Vagina (tissue), 2 donors: ENCODE measurements at regions of chr19 and their contacts with region 1.

Region 1: GRCh38 chr19:29001141-29001581 is 211.8 kb downstream of the UQCRFS1 start:
- DNase-seq: no peak
- H3K4me3 ChIP-seq: no peak overlapping the region
- H3K27ac ChIP-seq: peak overlapping the region; percentile 76
- H3K4me1 ChIP-seq: peaks cover 38% of the 10 kb centered on the region
- H3K27me3 ChIP-seq: no peaks in the 10 kb centered on the region
- CTCF ChIP-seq: no peak
- POLR2A ChIP-seq: no peak

Region 2: DNA sequence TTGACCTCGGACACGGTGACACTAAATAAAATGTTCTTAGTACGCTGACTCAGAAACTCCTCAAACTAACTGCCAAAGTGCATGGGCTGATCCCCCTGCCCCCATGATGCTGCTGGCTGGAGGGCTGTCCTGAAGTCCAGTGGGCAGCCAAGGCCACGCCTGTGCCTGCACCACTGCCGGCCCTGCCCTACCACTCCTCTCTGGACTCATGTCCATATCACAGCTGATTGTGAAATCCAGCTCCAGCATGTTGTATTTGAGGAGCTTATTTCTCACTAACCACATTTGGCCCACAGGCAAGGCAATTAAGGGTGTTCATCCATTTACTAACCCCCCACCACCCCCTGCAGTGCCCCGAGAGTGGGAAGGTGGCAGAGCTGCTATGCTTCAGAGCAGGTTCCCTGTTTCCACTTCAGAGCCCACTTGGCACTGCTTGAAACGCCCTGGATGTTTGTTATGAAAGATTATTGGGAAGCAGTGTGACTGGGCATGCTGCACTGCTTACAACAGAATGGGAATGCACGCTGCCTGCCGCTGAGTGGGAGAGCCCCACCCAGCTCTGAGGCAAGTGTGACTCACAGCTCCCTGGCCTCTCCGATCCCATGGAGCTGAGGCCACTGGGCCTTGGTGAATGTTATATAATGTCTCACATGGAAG is 97.8 kb after region 1 on chr19:
- intact Hi-C with region 1: loop called (anchors 10 kb)
- DNase-seq: peak in 1 of 2 donors; percentile 98
- H3K4me3 ChIP-seq: no peak overlapping the region
- H3K27ac ChIP-seq: peak overlapping the region; percentile 70
- H3K4me1 ChIP-seq: peaks cover 43% of the 10 kb centered on the region
- H3K27me3 ChIP-seq: no peaks in the 10 kb centered on the region
- CTCF ChIP-seq: no peak
- POLR2A ChIP-seq: no peak